ENCODE measurements at regions of chr1 and their contacts with region 1.

Region 1: DNA sequence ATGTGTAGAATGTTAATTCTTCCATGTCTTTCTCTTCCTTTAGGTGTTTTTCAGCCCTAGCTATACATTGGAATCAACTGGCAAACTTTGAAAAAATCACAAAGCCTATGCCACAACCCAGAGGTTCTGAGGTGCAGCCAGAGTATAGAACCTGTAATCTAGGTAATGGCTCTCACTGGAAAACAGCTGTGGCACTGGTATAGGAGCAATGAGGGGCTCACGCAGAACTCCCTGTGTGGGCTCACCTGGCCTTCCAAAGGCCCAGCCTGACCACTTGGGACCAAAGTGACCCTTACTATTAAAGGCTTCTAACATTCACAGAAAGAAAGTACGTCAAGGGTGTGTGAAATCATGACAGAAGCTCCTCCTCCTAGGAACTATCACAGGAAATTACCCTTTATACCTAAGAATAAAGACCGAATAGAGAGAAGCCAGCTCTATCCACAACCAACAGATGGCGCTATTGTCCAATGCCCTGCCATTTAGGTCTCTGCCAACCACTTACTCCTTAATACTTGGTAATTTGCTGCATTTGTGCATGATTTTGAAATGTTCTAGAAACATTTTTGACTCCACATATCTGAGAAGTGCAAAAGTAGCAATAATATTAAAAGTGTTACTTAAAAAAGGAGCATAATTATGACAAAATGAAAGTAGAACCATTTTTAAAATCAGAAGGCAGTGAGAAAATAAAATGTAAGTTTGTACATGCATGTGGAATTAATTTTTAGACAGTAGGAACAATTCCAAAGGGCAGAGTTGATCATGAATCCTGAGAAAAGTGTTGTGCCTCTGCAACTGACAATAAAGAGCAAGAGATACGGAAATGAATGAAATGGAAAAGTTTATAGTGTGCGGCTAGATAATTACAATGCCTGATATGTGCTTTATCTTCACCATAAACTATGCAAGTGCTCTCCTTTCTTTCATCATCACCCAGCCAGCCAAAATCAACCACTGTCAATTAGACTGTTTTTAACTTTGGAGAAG is 93.1 kb upstream of the HAO2 start:
- DNase-seq: peak; percentile 78
- ATAC-seq: peak; percentile 35; the same call in 1 of the 2 replicates
- H3K4me3 ChIP-seq: no peak overlapping the region
- H3K27ac ChIP-seq: no peak overlapping the region
- H3K4me1 ChIP-seq: peaks cover 17% of the 10 kb centered on the region
- H3K27me3 ChIP-seq: no peaks in the 10 kb centered on the region
- CTCF ChIP-seq: peak; percentile 94

Region 2: GRCh38 chr1:118151312-118151937 is 1124.0 kb before region 1 on chr1:
- CTCF ChIA-PET with region 1: no interaction called
- POLR2A ChIA-PET with region 1: no interaction called
- intact Hi-C with region 1: loop called (anchors 2 kb)
- DNase-seq: peak; percentile 79
- ATAC-seq: no peak
- H3K4me3 ChIP-seq: no peak overlapping the region
- H3K27ac ChIP-seq: no peak overlapping the region
- H3K4me1 ChIP-seq: peaks cover 17% of the 10 kb centered on the region; the same call in 1 of the 2 replicates
- H3K27me3 ChIP-seq: no peaks in the 10 kb centered on the region
- CTCF ChIP-seq: peak; percentile 90

Region 3: GRCh38 chr1:119080586-119080985 is 194.9 kb before region 1 on chr1:
- CTCF ChIA-PET with region 1: no interaction called
- POLR2A ChIA-PET with region 1: no interaction called
- intact Hi-C with region 1: loop called (anchors 5 kb)
- DNase-seq: peak; percentile 85
- ATAC-seq: peak; percentile 62
- H3K4me3 ChIP-seq: peak overlapping the region; percentile 42
- H3K27ac ChIP-seq: peak overlapping the region; percentile 66
- H3K4me1 ChIP-seq: peaks cover 29% of the 10 kb centered on the region
- H3K27me3 ChIP-seq: no peaks in the 10 kb centered on the region
- CTCF ChIP-seq: no peak

Region 4: GRCh38 chr1:119188926-119189325 is 86.5 kb before region 1 on chr1:
- CTCF ChIA-PET with region 1: no interaction called
- POLR2A ChIA-PET with region 1: no interaction called
- intact Hi-C with region 1: loop called (anchors 5 kb)
- DNase-seq: no peak
- ATAC-seq: no peak
- H3K4me3 ChIP-seq: no peak overlapping the region
- H3K27ac ChIP-seq: no peak overlapping the region
- H3K4me1 ChIP-seq: no peaks in the 10 kb centered on the region
- H3K27me3 ChIP-seq: no peaks in the 10 kb centered on the region
- CTCF ChIP-seq: no peak

Region 5: DNA sequence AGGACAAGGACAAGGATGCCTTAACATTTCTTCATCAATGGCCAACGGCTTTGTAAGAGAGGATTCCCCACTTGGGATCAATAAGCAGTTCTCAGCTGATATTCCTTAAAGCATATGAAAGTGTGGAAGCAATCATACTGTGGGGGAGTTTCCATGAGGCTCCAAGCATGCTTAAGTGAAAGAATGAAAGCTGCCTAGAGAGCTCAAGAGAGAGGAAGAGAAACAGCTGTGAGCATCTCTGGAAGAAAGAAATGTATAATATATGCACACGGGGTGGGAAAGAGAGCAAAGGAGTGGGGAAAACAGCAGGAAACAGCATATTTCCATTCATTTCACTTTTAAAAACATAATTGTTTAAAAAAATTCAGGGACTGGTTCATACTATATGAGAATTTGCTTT is 40.3 kb before region 1 on chr1:
- CTCF ChIA-PET with region 1: no interaction called
- POLR2A ChIA-PET with region 1: no interaction called
- intact Hi-C with region 1: no loop called
- DNase-seq: no peak
- ATAC-seq: no peak
- H3K4me3 ChIP-seq: no peak overlapping the region
- H3K27ac ChIP-seq: no peak overlapping the region
- H3K4me1 ChIP-seq: no peaks in the 10 kb centered on the region
- H3K27me3 ChIP-seq: no peaks in the 10 kb centered on the region
- CTCF ChIP-seq: no peak

Region 6: GRCh38 chr1:119253366-119253765 is 22.1 kb before region 1 on chr1:
- CTCF ChIA-PET with region 1: no interaction called
- POLR2A ChIA-PET with region 1: no interaction called
- intact Hi-C with region 1: loop called (anchors 1 kb)
- DNase-seq: peak; percentile 78
- ATAC-seq: peak; percentile 47
- H3K4me3 ChIP-seq: no peak overlapping the region
- H3K27ac ChIP-seq: peak overlapping the region; percentile 78
- H3K4me1 ChIP-seq: peaks cover 38% of the 10 kb centered on the region
- H3K27me3 ChIP-seq: no peaks in the 10 kb centered on the region
- CTCF ChIP-seq: no peak